ENCODE measurements at regions of chr11 and their contacts with region 1.

Region 1: GRCh38 chr11:119196833-119197483 is 9.2 kb upstream of the CBL start:
- DNase-seq: no peak

Region 2: DNA sequence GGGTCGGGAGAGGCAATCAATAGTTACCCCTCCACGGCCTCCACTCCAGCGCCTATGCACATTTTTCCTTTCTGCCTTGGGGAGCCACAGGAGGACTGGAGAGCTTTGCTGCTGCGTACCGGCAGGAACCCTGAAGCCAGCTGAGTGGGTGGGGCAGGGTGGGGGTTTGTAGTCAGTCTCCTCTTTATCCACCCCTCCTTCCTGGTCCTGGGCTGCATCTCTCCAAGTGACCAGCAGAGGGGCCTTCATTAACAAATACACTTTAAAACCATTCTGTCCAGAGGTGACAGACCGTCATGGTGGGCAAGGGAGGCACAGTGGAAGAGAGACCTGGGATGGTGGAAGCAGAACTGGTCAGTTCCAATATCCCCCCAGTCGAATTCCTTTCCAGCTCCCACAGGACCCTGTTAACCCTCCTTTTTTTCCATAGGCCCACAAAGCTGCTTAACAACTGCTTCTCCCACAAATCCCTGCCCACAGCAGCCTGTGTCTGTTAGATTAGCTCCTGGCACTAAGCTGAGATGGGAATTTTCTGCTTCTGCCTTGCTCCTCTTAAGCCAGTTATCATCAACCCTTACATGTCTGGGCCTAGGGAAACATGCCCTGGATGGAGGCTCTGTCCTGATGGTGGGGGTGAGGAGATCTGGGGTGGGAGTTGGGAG is 52.0 kb before region 1 on chr11:
- intact Hi-C with region 1: loop called in 1 of 2 experiments (anchors 10 kb)
- DNase-seq: no peak

Region 3: DNA sequence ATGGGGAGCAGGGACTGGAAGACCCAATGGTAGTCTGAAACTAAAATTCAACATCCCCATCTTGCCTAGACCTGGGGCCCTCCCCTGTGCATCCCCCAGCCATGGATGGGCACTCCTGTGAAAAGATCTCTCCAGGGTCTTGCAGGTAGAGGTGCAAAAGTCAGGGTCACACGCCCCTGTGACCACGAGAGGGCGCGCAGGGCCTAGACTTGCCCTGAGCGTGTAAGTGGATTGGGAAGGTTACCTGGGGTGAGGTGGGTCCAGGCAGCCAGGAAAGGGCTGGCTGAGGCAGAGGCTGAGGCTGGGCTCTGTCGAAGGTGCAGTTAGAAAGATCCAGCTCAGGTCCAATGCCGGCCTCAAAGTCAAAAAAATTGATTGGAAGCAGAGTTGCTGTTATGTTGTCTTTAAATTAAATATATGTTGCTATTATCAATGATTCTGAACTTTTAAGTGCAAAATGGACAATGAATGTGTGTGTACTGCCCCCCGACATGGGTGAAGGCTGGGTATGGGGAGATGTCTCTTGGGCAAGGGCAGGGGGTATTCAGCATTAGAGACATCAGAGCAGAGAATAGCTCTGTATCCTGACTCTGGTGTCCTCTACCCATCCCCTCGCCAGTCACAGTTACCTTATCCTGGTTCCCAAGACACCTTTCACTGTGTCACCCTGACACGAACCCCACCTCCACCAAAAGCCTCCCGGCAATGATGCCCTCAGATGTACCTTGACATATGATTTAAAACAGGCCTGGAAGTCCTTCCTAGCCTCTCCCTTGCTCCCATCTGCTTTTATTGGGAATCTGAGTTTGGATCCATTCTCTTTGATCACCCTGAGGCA is 1038.3 kb after region 1 on chr11:
- intact Hi-C with region 1: loop called in 1 of 2 experiments (anchors 5 kb)
- DNase-seq: no peak